Sciatic nerve (tissue), 2 donors: ENCODE measurements at regions of chr7 and their contacts with region 1.

Region 1: DNA sequence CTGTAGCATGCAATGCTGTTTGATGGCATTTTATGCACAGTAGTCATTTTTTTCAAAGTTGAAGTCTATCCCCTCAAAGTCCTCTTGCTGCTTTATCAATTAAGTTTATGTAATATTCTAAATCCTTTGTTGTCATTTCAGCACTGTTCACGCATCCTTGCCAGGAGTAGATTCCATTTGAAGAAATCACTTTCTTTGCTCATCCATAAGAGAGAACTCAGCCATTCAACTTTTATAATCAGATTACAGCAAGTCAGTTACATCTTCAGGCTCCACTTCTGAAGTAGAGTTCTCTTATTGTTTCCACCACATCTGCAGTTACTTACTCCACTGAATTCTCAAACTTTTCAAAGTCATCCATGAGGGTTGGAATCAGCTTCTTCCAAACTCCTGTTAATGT is 32.3 kb downstream of the SDHAF3 start:
- DNase-seq: no peak
- ATAC-seq: no peak

Region 2: DNA sequence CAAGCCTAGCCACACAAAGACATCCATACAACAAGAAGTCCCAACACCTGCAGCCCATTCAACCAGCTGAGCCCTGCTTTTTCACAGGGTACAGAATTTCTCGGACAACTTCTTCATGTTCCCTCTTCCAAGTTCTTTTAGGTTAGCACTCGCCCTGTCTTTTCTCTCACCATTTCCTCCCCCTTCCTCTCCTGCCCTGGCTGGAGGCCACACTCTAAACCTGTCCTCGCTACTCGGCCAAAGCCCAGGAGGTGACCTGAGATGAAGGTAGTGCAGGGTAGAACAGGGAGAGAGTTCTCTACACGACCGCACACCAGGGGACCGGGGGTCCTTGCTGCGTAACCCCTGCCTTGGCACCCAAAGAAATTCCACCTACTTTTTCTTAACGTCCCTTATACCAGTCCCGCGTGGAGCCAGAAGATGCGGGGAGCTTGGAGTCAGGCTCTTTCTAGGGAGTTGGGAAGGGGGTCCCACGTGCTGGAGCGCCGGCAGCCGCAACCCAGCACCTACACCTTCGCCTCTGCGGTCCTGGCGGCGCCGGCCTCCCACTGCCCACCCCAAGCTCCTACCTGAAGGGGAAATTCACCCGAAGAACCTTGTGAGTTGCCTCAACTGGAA is 160.5 kb before region 1 on chr7:
- intact Hi-C with region 1: no loop called
- DNase-seq: no peak
- ATAC-seq: no peak

Region 3: GRCh38 chr7:97187067-97187466 is 37.2 kb after region 1 on chr7:
- intact Hi-C with region 1: no loop called
- DNase-seq: no peak
- ATAC-seq: no peak

Region 4: GRCh38 chr7:97226541-97226940 is 76.7 kb after region 1 on chr7:
- intact Hi-C with region 1: loop called (anchors 2 kb)
- DNase-seq: no peak
- ATAC-seq: no peak